ENCODE measurements at regions of chr1 and their contacts with region 1.

Region 1: GRCh38 chr1:226827968-226828513 is 42.4 kb upstream of the PSEN2 start:
- DNase-seq: peak; percentile 95 to 97
- ATAC-seq: peak; percentile 97 to 99 (median 98)
- H3K4me3 ChIP-seq: peak overlapping the region in 8 of 10 donors; percentile 12 to 43 (median 31)
- H3K27ac ChIP-seq: peak overlapping the region in 9 of 10 donors; percentile 73 to 88 (median 84)
- H3K4me1 ChIP-seq: peaks cover 0 to 27% (median 17%) of the 10 kb centered on the region in 9 donors
- H3K27me3 ChIP-seq: no peaks in the 10 kb centered on the region
- CTCF ChIP-seq: peak; percentile 87 to 99 (median 97)

Region 2: GRCh38 chr1:226293553-226293920 is 534.5 kb before region 1 on chr1:
- intact Hi-C with region 1: no loop called
- DNase-seq: no peak
- ATAC-seq: no peak
- H3K4me3 ChIP-seq: no peak overlapping the region
- H3K27ac ChIP-seq: no peak overlapping the region
- H3K4me1 ChIP-seq: no peaks in the 10 kb centered on the region
- H3K27me3 ChIP-seq: no peaks in the 10 kb centered on the region
- CTCF ChIP-seq: no peak

Region 3: GRCh38 chr1:226407497-226408284 is 420.4 kb before region 1 on chr1 and contains the start of gene PARP1:
- intact Hi-C with region 1: loop called in 1 of 10 experiments (anchors 10 kb)
- DNase-seq: peak; percentile 83 to 89
- ATAC-seq: peak; percentile 82 to 96 (median 92)
- H3K4me3 ChIP-seq: peak within 1 kb of the TSS; percentile 57 to 98 (median 87)
- H3K27ac ChIP-seq: peak within 1 kb of the TSS; percentile 33 to 93 (median 87)
- H3K4me1 ChIP-seq: peaks cover 16 to 49% (median 44%) of the 10 kb centered on the region in 9 donors
- H3K27me3 ChIP-seq: no peaks in the 10 kb centered on the region
- CTCF ChIP-seq: peak; percentile 62 to 99 (median 78)
- total RNA-seq, gene PARP1: 98.9 to 154 (median 111) TPM

Region 4: DNA sequence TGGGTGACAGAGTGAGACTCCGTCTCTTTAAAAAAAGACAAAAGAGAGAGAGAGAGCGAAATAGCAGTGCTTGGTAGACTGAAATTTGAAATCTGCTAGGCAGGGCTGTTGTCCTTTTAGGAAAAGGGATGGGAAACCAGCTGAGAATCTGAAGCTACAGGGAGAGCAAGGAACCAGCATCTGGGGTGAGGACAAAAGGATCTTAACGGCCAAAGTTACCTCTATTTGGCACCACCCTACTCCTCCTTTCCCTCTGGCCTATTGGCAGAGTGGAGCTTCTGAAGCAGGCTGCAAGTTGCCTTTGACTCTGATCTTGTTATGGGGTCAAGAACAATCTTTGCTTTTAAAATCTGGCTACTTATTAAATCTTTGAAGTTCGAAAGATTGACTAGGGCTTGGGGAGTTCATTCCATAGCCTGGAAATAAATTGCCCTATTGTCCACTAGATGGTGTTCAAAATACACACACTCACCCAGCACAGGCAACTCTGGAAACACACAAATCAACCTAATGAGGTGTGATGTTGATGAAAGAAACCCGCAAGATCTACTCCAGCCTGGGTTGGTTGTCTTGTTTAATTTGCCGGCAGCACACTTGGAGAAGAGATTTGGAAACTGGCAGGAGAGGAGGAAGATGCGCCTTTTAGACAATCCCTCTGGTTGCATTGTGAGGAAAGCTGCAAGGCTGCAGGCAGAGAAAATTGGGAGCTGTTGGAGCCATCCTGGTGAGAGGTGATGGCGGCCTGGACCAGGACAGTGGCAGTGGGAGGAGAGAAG is 403.6 kb before region 1 on chr1:
- intact Hi-C with region 1: loop called in 3 of 10 experiments (anchors 5 to 10 kb)
- DNase-seq: no peak
- ATAC-seq: peak; percentile 54 to 87 (median 77)
- H3K4me3 ChIP-seq: no peak overlapping the region
- H3K27ac ChIP-seq: no peak overlapping the region
- H3K4me1 ChIP-seq: peaks cover 0 to 9% (median 3%) of the 10 kb centered on the region in 9 donors
- H3K27me3 ChIP-seq: peaks cover 0 to 6% (median 0%) of the 10 kb centered on the region in 7 donors
- CTCF ChIP-seq: peak; percentile 37 to 69 (median 59)

Region 5: GRCh38 chr1:226547754-226548191 is 280.3 kb before region 1 on chr1:
- intact Hi-C with region 1: loop called in 4 of 10 experiments (anchors 2 to 10 kb)
- DNase-seq: peak; percentile 75 to 82
- ATAC-seq: peak; percentile 69 to 83 (median 77)
- H3K4me3 ChIP-seq: peak overlapping the region in 9 of 10 donors; percentile 5 to 62 (median 55)
- H3K27ac ChIP-seq: peak overlapping the region in 1 of 10 donors; percentile 5
- H3K4me1 ChIP-seq: peaks cover 12 to 85% (median 40%) of the 10 kb centered on the region in 9 donors
- H3K27me3 ChIP-seq: peaks cover 0 to 45% (median 14%) of the 10 kb centered on the region in 7 donors
- CTCF ChIP-seq: peak; percentile 64 to 95 (median 85)

Region 6: DNA sequence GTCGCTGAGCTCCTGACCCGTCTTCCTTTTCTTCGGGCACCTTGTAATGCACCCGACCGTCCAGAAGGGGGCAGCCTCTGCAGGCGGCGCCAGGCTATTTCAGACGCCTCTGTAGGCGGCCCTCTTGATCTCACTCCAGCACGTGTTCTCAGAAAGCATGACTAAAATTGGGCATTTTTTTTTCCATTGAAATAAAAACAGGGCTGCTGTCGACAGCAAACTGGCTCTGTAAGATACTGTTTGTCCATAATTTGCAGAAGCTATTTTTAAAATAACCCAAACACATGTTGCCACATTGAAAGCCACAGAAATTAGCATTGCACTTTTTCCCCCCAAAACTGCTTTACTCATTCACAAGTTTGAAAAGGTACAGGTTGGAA is 201.5 kb before region 1 on chr1:
- intact Hi-C with region 1: loop called in 2 of 10 experiments (anchors 2 to 5 kb)
- DNase-seq: peak; percentile 76 to 79
- ATAC-seq: peak; percentile 70 to 90 (median 86)
- H3K4me3 ChIP-seq: peak overlapping the region in 2 of 10 donors; percentile 7 to 14
- H3K27ac ChIP-seq: no peak overlapping the region
- H3K4me1 ChIP-seq: peaks cover 0 to 12% (median 0%) of the 10 kb centered on the region in 9 donors
- H3K27me3 ChIP-seq: no peaks in the 10 kb centered on the region
- CTCF ChIP-seq: peak; percentile 95 to 99 (median 97)

Region 7: GRCh38 chr1:226634166-226634588 is 193.9 kb before region 1 on chr1:
- intact Hi-C with region 1: loop called (anchors 1 to 5 kb)
- DNase-seq: peak; percentile 80 to 86
- ATAC-seq: peak; percentile 64 to 83 (median 79)
- H3K4me3 ChIP-seq: no peak overlapping the region
- H3K27ac ChIP-seq: peak overlapping the region in 8 of 10 donors; percentile 11 to 71 (median 40)
- H3K4me1 ChIP-seq: peaks cover 7 to 68% (median 40%) of the 10 kb centered on the region in 9 donors
- H3K27me3 ChIP-seq: no peaks in the 10 kb centered on the region
- CTCF ChIP-seq: peak; percentile 93 to 98 (median 95)

Region 8: DNA sequence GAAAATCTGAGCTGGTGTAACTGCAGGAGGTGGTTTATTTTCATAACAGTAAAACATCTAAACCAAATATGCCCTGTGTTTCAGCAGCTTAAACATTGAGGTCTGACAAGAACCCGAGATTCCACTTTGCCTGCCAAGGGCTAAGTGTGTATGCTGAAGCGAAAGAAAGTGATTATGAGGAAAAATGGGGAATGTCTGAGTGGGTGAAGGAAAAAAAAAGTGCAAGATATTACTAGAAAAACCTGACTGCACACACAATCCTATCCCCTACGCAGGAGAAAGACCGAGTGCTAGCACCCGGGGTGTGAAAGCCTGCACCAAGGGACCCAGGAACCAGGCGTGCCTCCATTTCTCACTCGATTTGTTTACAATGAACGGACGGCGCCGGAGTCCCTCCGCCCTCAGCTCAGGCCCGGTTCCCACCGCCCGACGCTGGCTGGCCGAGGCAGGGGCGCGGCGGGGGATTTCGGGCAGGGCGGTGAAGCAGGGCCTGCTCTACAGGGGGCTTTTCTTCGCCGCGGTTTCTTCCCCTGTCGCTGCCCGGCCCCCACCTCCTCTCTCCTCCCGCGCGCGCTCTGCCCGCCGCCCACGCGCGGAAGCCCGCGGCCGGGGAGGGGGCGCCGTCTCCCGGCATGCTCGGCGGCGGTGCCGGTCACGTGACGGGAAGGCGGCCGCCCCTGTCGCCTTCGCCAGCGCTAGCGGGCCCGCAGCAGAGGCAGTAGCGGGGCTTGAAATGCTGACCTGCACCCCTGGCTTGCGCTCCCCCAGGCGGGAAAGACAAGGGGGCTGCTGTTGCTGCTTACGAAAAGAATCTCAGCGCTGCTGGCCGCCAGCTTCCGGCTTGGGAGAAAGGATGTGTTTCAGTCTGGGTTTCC is 124.8 kb before region 1 on chr1:
- intact Hi-C with region 1: loop called in 2 of 10 experiments (anchors 10 kb)
- DNase-seq: peak; percentile 78 to 82
- ATAC-seq: peak; percentile 85 to 92 (median 90)
- H3K4me3 ChIP-seq: peak overlapping the region; percentile 33 to 81 (median 70)
- H3K27ac ChIP-seq: peak overlapping the region; percentile 94 to 99 (median 96)
- H3K4me1 ChIP-seq: peaks cover 0 to 88% (median 48%) of the 10 kb centered on the region in 9 donors
- H3K27me3 ChIP-seq: no peaks in the 10 kb centered on the region
- CTCF ChIP-seq: no peak

Region 9: DNA sequence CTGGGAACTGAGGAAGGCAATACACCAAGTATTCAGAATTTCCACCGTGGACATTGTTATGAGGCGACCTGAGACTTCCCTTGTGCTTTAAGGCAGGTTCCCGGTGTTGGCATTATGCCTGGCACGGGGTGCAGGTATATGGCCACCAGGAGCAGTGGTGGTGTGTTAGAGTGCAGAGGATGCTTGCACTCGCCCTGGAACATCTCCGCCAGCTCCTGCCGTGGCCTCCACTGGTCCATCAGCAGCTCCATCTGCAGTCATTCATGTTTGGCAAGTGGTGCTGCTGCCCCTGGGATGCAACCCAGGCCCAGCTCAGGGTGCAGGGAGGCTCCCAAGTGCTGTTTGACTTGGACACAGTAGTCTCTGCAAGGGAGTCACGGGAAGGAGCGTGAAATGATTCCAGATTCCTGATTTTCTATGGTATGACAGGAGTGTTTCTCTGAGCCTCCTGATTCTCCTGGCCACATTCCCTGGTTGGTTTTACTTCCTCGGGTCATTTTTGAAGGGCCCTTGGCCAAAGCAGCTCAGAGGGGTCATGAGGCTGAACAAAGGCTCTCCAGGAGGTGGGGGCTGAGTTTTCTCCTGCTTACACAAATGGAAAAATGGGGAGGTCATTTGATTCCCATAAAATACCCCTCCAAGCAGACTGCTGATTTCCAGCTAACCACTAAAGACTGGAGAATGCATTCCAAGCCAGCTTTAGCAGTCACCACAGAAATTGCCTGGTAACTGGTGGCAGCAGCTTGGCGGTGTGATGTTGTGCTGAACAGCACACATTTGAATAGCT is 18.1 kb before region 1 on chr1:
- intact Hi-C with region 1: no loop called
- DNase-seq: no peak
- ATAC-seq: no peak
- H3K4me3 ChIP-seq: no peak overlapping the region
- H3K27ac ChIP-seq: no peak overlapping the region
- H3K4me1 ChIP-seq: peaks cover 4 to 15% (median 13%) of the 10 kb centered on the region in 9 donors
- H3K27me3 ChIP-seq: no peaks in the 10 kb centered on the region
- CTCF ChIP-seq: no peak

Measured in heart right ventricle (tissue), 16 donors.